MCF 10A (cell line): ENCODE measurements at regions of chr6 and their contacts with region 1.

Region 1: GRCh38 chr6:137218917-137219663 is at the start of gene IFNGR1:
- DNase-seq: peak; percentile 96
- H3K4me3 Mint-ChIP-seq: peak within 1 kb of the TSS; percentile 91
- H3K27ac Mint-ChIP-seq: peak within 1 kb of the TSS; percentile 93
- H3K4me1 Mint-ChIP-seq: peaks cover 38% of the 10 kb centered on the region
- H3K27me3 Mint-ChIP-seq: no peaks in the 10 kb centered on the region
- CTCF ChIP-seq: no peak
- total RNA-seq, gene IFNGR1: 57.9 and 58.4 TPM in 2 replicates

Region 2: GRCh38 chr6:136989571-136990241 is 229.4 kb before region 1 on chr6:
- CTCF ChIA-PET with region 1: no interaction called
- POLR2A ChIA-PET with region 1: no interaction called
- intact Hi-C with region 1: no loop called
- DNase-seq: no peak
- H3K4me3 Mint-ChIP-seq: peak overlapping the region; percentile 43
- H3K27ac Mint-ChIP-seq: no peak overlapping the region
- H3K4me1 Mint-ChIP-seq: peaks cover 10% of the 10 kb centered on the region
- H3K27me3 Mint-ChIP-seq: peaks cover 18% of the 10 kb centered on the region
- CTCF ChIP-seq: no peak

Region 3: GRCh38 chr6:137094411-137095008 is 124.6 kb before region 1 on chr6:
- CTCF ChIA-PET with region 1: interaction called, 3 read pairs
- POLR2A ChIA-PET with region 1: interaction called, 10 read pairs
- intact Hi-C with region 1: no loop called
- DNase-seq: peak; percentile 81
- H3K4me3 Mint-ChIP-seq: no peak overlapping the region
- H3K27ac Mint-ChIP-seq: no peak overlapping the region
- H3K4me1 Mint-ChIP-seq: peaks cover 9% of the 10 kb centered on the region
- H3K27me3 Mint-ChIP-seq: no peaks in the 10 kb centered on the region
- CTCF ChIP-seq: peak; percentile 65

Region 4: DNA sequence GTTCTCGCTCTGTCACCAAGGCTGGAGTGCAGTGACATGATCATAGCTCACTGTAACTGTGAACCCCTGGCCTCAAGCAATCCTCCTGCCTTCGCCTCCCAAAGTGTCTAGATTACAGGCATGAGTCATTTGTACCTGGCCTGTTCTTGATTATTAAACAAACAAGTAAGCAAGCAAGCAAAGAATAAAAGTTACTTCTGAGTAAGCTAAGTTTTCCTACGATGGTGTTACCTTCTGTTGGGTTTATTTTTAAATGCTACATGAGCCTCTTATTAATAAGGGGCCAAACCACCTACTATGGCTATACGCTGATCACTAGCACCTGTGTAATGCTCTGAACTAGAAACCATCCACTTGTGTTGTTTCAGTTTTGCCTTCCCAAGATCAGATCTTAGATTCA is 96.5 kb before region 1 on chr6:
- CTCF ChIA-PET with region 1: no interaction called
- POLR2A ChIA-PET with region 1: no interaction called
- intact Hi-C with region 1: no loop called
- DNase-seq: peak; percentile 41
- H3K4me3 Mint-ChIP-seq: no peak overlapping the region
- H3K27ac Mint-ChIP-seq: no peak overlapping the region
- H3K4me1 Mint-ChIP-seq: no peaks in the 10 kb centered on the region
- H3K27me3 Mint-ChIP-seq: no peaks in the 10 kb centered on the region
- CTCF ChIP-seq: no peak

Region 5: GRCh38 chr6:137165375-137166246 is 53.5 kb before region 1 on chr6:
- CTCF ChIA-PET with region 1: interaction called, 5 read pairs
- POLR2A ChIA-PET with region 1: interaction called, 14 read pairs
- intact Hi-C with region 1: loop called (anchors 5 kb)
- DNase-seq: peak; percentile 72
- H3K4me3 Mint-ChIP-seq: no peak overlapping the region
- H3K27ac Mint-ChIP-seq: no peak overlapping the region
- H3K4me1 Mint-ChIP-seq: peaks cover 32% of the 10 kb centered on the region
- H3K27me3 Mint-ChIP-seq: no peaks in the 10 kb centered on the region
- CTCF ChIP-seq: peak; percentile 58

Region 6: GRCh38 chr6:137233911-137234863 is 15.1 kb after region 1 on chr6:
- CTCF ChIA-PET with region 1: interaction called, 9 read pairs
- POLR2A ChIA-PET with region 1: interaction called, 651 read pairs
- intact Hi-C with region 1: loop called (anchors 2 kb)
- DNase-seq: peak; percentile 97
- H3K4me3 Mint-ChIP-seq: peak overlapping the region; percentile 41
- H3K27ac Mint-ChIP-seq: peak overlapping the region; percentile 95
- H3K4me1 Mint-ChIP-seq: peaks cover 40% of the 10 kb centered on the region
- H3K27me3 Mint-ChIP-seq: no peaks in the 10 kb centered on the region
- CTCF ChIP-seq: no peak

Region 7: GRCh38 chr6:137261393-137262160 is 42.5 kb after region 1 on chr6:
- CTCF ChIA-PET with region 1: interaction called, 4 read pairs
- POLR2A ChIA-PET with region 1: interaction called, 47 read pairs
- intact Hi-C with region 1: loop called (anchors 5 kb)
- DNase-seq: peak; percentile 79
- H3K4me3 Mint-ChIP-seq: peak overlapping the region; percentile 65
- H3K27ac Mint-ChIP-seq: peak overlapping the region; percentile 84
- H3K4me1 Mint-ChIP-seq: peaks cover 40% of the 10 kb centered on the region
- H3K27me3 Mint-ChIP-seq: no peaks in the 10 kb centered on the region
- CTCF ChIP-seq: no peak

Region 8: GRCh38 chr6:137313928-137314855 is 95.1 kb after region 1 on chr6:
- CTCF ChIA-PET with region 1: interaction called, 4 read pairs
- POLR2A ChIA-PET with region 1: interaction called, 15 read pairs
- intact Hi-C with region 1: loop called (anchors 5 kb)
- DNase-seq: peak; percentile 76
- H3K4me3 Mint-ChIP-seq: no peak overlapping the region
- H3K27ac Mint-ChIP-seq: no peak overlapping the region
- H3K4me1 Mint-ChIP-seq: peaks cover 18% of the 10 kb centered on the region
- H3K27me3 Mint-ChIP-seq: no peaks in the 10 kb centered on the region
- CTCF ChIP-seq: peak; percentile 67